HEK293 (cell line): ENCODE measurements at regions of chr1 and their contacts with region 1.

Region 1: GRCh38 chr1:145891587-145892485 is 6.2 kb upstream of the ANKRD35 start:
- H3K4me3 ChIP-seq: no peak overlapping the region
- H3K27ac ChIP-seq: peak overlapping the region; percentile 66
- H3K4me1 ChIP-seq: peaks cover 15% of the 10 kb centered on the region
- CTCF ChIP-seq: peak; percentile 95; the same call in 1 of the 2 replicates

Region 2: DNA sequence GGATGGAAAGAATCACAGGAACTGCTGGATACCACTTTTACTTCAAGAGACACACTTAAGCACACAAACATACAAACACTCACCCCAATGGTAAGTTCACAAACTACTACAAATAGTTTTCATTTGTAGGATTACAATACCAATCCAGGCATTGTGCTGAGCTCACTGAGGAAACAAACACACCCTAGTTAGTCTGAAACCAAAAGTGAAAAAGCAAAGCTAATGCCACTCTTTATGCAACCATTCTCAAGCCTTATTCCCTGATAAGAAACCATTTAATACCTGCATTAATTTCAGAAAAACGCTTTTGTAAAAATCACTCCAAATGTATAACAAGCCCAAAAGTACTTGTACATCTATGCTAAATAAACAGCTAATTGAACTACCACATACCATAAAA is 106.3 kb before region 1 on chr1:
- CTCF ChIA-PET with region 1: no interaction called
- POLR2A ChIA-PET with region 1: no interaction called
- H3K4me3 ChIP-seq: no peak overlapping the region
- H3K27ac ChIP-seq: no peak overlapping the region
- H3K4me1 ChIP-seq: 0 out of 2 replicates have a peak, but pooled peaks cover 5% of the 10 kb centered on the region
- CTCF ChIP-seq: no peak

Region 3: DNA sequence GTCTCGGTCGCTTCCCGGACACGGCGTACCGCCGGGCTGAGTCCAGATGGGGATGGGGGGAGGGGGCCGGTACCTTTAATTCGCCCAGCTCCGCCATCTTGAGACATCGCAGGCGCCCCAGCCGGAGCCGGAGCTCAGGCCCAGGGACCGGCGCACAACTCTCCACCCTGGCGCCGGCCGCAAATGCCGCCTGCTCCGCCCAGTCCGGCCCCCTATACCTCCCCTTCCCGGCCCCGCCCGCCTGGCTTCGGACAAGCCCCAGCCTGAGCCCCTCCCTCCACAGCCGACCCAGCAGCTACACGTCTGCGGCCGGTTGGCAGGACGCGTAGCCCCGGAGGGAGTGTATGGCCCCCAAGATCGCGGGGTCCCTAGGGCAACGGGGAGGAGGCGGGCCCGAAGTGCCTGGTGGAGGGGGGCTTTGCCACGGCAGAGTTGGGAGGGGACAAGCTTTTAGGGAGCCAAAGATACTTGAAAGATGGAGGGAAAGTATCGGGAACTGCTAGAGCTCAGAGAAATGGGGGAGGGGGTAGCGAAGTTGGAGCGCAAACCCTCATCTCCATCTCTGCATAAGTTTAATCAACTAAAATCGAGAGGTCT is 32.8 kb before region 1 on chr1 and contains the start of gene PIAS3:
- CTCF ChIA-PET with region 1: interaction called, 25 read pairs
- POLR2A ChIA-PET with region 1: interaction called, 41 read pairs
- H3K4me3 ChIP-seq: peak within 1 kb of the TSS; percentile 68
- H3K27ac ChIP-seq: peak within 1 kb of the TSS; percentile 65; the same call in 1 of the 2 replicates
- H3K4me1 ChIP-seq: no peaks in the 10 kb centered on the region
- CTCF ChIP-seq: no peak

Region 4: DNA sequence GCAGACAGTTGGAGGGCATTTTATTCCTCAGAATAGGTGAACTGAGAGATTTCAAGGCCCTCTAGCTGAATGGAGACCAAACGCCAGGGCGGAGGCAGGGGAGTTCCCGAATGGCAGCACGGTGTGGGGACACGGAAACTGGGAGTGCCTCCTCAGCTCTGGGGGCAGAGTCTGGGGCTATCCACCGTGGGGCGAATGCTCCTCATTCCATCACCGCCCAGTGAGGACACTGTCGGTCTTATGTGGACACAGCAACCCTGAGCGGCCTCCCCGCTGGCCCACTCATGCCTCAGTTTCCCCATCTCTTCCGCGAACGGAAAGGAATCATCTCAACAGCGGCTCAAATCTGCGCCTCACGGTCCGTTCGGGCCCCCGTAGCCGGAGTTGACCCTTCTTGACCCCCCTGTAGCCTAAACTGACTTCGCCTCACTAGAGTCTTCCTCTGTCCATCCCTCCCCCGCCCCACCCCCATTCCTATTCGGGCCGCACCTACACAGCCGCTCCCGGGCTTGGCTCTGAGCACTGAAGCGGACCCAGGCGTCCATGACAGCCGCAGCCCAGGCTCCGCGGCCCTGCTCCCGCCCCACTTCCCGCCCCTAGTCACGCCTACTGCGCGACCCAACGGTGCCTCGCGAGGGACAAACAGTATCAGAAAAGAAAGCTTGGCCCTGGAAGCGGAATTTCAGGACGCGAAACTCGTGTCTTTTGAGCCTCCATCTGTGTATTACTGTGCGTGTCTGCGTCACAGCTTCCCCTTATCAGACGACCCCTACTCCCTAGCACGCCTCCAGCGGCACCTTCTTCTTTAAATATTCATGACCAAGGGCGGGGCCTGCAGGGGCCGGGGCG is 26.5 kb after region 1 on chr1 and contains the start of gene PEX11B:
- CTCF ChIA-PET with region 1: interaction called, 222 read pairs
- POLR2A ChIA-PET with region 1: no interaction called
- H3K4me3 ChIP-seq: peak within 1 kb of the TSS; percentile 76
- H3K27ac ChIP-seq: peak within 1 kb of the TSS; percentile 28; the same call in 1 of the 2 replicates
- H3K4me1 ChIP-seq: peaks cover 3% of the 10 kb centered on the region; the same call in 1 of the 2 replicates
- CTCF ChIP-seq: no peak

Region 5: DNA sequence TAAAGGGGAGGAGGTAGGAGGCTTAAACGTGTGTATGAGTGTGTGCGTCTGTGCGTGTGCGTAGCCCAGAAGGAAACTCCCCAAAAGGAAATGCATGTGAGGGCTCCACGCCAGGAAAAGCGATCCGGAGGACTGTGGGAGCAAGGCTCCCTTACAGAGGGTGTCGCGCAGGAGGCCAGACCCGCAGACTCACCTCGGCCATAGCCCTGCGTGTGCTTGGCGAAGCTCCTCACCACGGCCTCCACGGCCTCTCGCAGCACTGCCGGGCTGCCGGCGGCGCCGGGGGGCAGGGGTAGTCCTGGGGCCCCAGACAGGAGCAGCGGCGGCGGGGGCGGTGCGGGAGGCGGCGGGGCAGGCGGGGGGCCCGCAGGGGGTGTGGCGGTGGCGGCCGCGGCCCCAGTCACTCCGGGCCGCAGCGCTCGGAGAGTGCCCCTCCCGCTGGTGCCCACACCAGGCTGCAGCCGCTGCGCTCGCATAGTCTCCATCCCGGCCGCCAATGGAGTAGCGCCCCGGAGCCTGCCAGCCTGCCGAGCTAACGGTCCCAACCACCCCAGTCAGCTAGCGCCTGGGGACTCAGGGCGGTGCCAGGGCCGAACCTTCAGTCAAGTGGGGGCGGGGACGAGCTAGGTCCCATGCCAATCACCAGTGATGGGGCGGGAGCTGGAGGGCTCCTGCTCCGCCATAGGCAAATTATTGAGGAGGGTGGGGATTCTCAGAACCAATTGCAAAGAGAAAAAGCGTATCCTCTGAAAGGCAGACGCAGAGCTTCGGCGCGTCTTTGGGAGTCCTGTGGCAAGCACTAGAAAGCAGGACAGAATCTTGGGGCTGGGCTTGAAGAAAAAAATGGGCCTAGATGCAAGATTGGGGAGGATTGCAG is 65.8 kb after region 1 on chr1 and contains the start of gene LIX1L:
- CTCF ChIA-PET with region 1: interaction called, 15 read pairs
- POLR2A ChIA-PET with region 1: interaction called, 6 read pairs
- H3K4me3 ChIP-seq: peak within 1 kb of the TSS; percentile 81
- H3K27ac ChIP-seq: peak within 1 kb of the TSS; percentile 49; the same call in 1 of the 2 replicates
- H3K4me1 ChIP-seq: peaks cover 10% of the 10 kb centered on the region
- CTCF ChIP-seq: no peak

Region 6: GRCh38 chr1:145978854-145979759 is 87.3 kb after region 1 on chr1:
- CTCF ChIA-PET with region 1: interaction called, 56 read pairs
- POLR2A ChIA-PET with region 1: interaction called, 3 read pairs
- H3K4me3 ChIP-seq: no peak overlapping the region
- H3K27ac ChIP-seq: peak overlapping the region; percentile 60
- H3K4me1 ChIP-seq: peaks cover 6% of the 10 kb centered on the region
- CTCF ChIP-seq: no peak; the same call in 1 of the 2 replicates

Region 7: GRCh38 chr1:146012737-146013403 is 121.0 kb after region 1 on chr1:
- CTCF ChIA-PET with region 1: interaction called, 29 read pairs
- POLR2A ChIA-PET with region 1: no interaction called
- H3K4me3 ChIP-seq: no peak overlapping the region
- H3K27ac ChIP-seq: no peak overlapping the region
- H3K4me1 ChIP-seq: no peaks in the 10 kb centered on the region
- CTCF ChIP-seq: peak; percentile 73